Caco-2 (cell line): ENCODE measurements at regions of chr5 and their contacts with region 1.

Region 1: GRCh38 chr5:96614110-96614691 is 48.0 kb upstream of the CAST start:
- DNase-seq: peak; percentile 73 to 82
- H3K4me3 ChIP-seq: no peak overlapping the region
- H3K4me3 Mint-ChIP-seq: no peak overlapping the region
- H3K27ac Mint-ChIP-seq: peak overlapping the region; percentile 8
- H3K4me1 ChIP-seq: peaks cover 7% of the 10 kb centered on the region
- H3K4me1 Mint-ChIP-seq: no peaks in the 10 kb centered on the region
- H3K27me3 ChIP-seq: no peaks in the 10 kb centered on the region
- H3K27me3 Mint-ChIP-seq: no peaks in the 10 kb centered on the region
- CTCF ChIP-seq: peak; percentile 33 to 82

Region 2: GRCh38 chr5:96527768-96528661 is 86.2 kb before region 1 on chr5:
- CTCF ChIA-PET with region 1: no interaction called
- POLR2A ChIA-PET with region 1: no interaction called
- intact Hi-C with region 1: no loop called
- DNase-seq: no peak
- H3K4me3 ChIP-seq: no peak overlapping the region
- H3K4me3 Mint-ChIP-seq: no peak overlapping the region
- H3K27ac Mint-ChIP-seq: no peak overlapping the region
- H3K4me1 ChIP-seq: no peaks in the 10 kb centered on the region
- H3K4me1 Mint-ChIP-seq: no peaks in the 10 kb centered on the region
- H3K27me3 ChIP-seq: no peaks in the 10 kb centered on the region
- H3K27me3 Mint-ChIP-seq: peaks cover 6% of the 10 kb centered on the region
- CTCF ChIP-seq: no peak

Region 3: DNA sequence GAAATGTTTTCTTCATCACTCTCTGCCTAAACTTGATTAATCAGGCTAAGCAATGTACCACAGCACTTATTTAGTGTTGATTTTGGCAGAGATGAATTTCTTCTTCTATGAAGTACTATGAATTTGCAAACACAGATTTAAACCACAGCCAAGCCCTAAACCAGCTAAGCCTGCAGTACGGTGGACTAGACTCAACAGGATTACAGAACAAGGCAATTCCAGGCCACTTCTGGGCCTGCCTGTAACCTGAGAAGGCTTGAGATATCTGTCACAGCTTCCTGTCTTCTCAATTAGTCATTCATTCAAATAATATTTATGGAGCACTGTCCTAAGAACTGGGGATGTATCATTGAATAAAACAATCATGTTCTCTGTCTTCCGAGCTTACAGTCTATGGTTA is 15.6 kb after region 1 on chr5:
- CTCF ChIA-PET with region 1: no interaction called
- POLR2A ChIA-PET with region 1: no interaction called
- intact Hi-C with region 1: no loop called
- DNase-seq: no peak
- H3K4me3 ChIP-seq: no peak overlapping the region
- H3K4me3 Mint-ChIP-seq: no peak overlapping the region
- H3K27ac Mint-ChIP-seq: peak overlapping the region; percentile 62
- H3K4me1 ChIP-seq: peaks cover 46% of the 10 kb centered on the region
- H3K4me1 Mint-ChIP-seq: peaks cover 64% of the 10 kb centered on the region
- H3K27me3 ChIP-seq: no peaks in the 10 kb centered on the region
- H3K27me3 Mint-ChIP-seq: no peaks in the 10 kb centered on the region
- CTCF ChIP-seq: no peak

Region 4: GRCh38 chr5:96641368-96642228 is 27.4 kb after region 1 on chr5:
- CTCF ChIA-PET with region 1: interaction called, 5 read pairs
- POLR2A ChIA-PET with region 1: no interaction called
- intact Hi-C with region 1: loop called (anchors 1 kb)
- DNase-seq: peak; percentile 61 to 73
- H3K4me3 ChIP-seq: no peak overlapping the region
- H3K4me3 Mint-ChIP-seq: peak overlapping the region; percentile 55
- H3K27ac Mint-ChIP-seq: peak overlapping the region; percentile 86
- H3K4me1 ChIP-seq: peaks cover 61% of the 10 kb centered on the region
- H3K4me1 Mint-ChIP-seq: peaks cover 49% of the 10 kb centered on the region
- H3K27me3 ChIP-seq: no peaks in the 10 kb centered on the region
- H3K27me3 Mint-ChIP-seq: no peaks in the 10 kb centered on the region
- CTCF ChIP-seq: no peak

Region 5: DNA sequence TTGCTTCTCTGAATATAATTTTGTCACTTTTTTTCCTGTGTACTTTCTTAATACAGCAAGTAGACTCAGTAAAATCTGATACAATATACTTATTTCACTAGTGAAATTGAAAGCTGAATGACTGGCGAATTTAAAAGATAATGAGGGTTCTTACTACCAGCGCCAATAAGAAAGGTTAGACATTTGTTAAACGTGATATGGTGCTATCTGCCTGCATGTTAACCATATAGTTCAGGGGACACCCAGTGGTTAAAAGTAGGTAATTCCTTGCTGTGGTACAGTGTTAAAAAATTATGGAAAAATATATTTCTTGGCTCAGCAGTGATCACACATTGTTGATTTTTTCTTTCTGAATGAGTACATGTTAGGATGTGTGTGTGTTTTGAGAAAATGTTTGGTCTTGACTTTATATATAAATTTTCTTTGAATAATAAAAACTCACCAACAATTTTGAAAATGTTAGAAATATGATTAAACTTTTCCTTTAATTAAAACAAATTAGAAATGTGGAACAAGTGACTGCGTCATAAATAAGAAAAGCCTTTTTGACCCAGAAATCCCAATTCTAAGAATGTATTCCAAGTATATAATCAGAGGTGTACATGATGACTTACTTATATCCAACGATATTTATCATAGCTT is 73.7 kb after region 1 on chr5:
- CTCF ChIA-PET with region 1: interaction called, 6 read pairs
- POLR2A ChIA-PET with region 1: no interaction called
- intact Hi-C with region 1: loop called (anchors 1 kb)
- DNase-seq: peak in 1 of 2 experiments; percentile 38
- H3K4me3 ChIP-seq: no peak overlapping the region
- H3K4me3 Mint-ChIP-seq: no peak overlapping the region
- H3K27ac Mint-ChIP-seq: no peak overlapping the region
- H3K4me1 ChIP-seq: peaks cover 10% of the 10 kb centered on the region
- H3K4me1 Mint-ChIP-seq: peaks cover 24% of the 10 kb centered on the region
- H3K27me3 ChIP-seq: no peaks in the 10 kb centered on the region
- H3K27me3 Mint-ChIP-seq: no peaks in the 10 kb centered on the region
- CTCF ChIP-seq: peak; percentile 61 to 65

Region 6: GRCh38 chr5:96702503-96703383 is 88.5 kb after region 1 on chr5:
- CTCF ChIA-PET with region 1: no interaction called
- POLR2A ChIA-PET with region 1: no interaction called
- intact Hi-C with region 1: no loop called
- DNase-seq: peak; percentile 57 to 81
- H3K4me3 ChIP-seq: peak overlapping the region; percentile 43
- H3K4me3 Mint-ChIP-seq: peak overlapping the region; percentile 62
- H3K27ac Mint-ChIP-seq: peak overlapping the region; percentile 39
- H3K4me1 ChIP-seq: peaks cover 7% of the 10 kb centered on the region; the same call in 1 of the 2 replicates
- H3K4me1 Mint-ChIP-seq: peaks cover 11% of the 10 kb centered on the region
- H3K27me3 ChIP-seq: no peaks in the 10 kb centered on the region
- H3K27me3 Mint-ChIP-seq: no peaks in the 10 kb centered on the region
- CTCF ChIP-seq: no peak

Region 7: DNA sequence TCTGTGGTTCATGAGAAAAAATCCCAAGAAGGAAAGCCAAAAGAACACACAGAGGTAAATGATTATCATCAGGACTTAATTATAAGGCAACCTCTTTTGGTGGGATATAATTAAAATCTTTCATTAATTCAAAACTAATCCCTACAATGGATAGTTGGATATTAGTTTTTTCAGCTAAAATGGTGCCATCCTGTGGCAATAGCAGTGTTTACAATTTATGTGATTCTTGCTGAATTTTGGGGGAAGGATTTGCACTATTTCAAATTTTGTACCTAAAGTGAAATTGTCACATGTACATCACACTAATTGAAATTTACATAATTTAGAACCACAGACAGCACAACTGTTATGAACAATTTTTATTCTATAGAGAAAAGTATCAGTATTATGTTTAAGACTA is 115.0 kb after region 1 on chr5:
- CTCF ChIA-PET with region 1: interaction called, 4 read pairs
- POLR2A ChIA-PET with region 1: no interaction called
- intact Hi-C with region 1: loop called (anchors 1 kb)
- DNase-seq: no peak
- H3K4me3 ChIP-seq: no peak overlapping the region
- H3K4me3 Mint-ChIP-seq: no peak overlapping the region
- H3K27ac Mint-ChIP-seq: no peak overlapping the region
- H3K4me1 ChIP-seq: peaks cover 12% of the 10 kb centered on the region
- H3K4me1 Mint-ChIP-seq: peaks cover 6% of the 10 kb centered on the region
- H3K27me3 ChIP-seq: no peaks in the 10 kb centered on the region
- H3K27me3 Mint-ChIP-seq: no peaks in the 10 kb centered on the region
- CTCF ChIP-seq: peak in 1 of 2 experiments; percentile 24

Region 8: DNA sequence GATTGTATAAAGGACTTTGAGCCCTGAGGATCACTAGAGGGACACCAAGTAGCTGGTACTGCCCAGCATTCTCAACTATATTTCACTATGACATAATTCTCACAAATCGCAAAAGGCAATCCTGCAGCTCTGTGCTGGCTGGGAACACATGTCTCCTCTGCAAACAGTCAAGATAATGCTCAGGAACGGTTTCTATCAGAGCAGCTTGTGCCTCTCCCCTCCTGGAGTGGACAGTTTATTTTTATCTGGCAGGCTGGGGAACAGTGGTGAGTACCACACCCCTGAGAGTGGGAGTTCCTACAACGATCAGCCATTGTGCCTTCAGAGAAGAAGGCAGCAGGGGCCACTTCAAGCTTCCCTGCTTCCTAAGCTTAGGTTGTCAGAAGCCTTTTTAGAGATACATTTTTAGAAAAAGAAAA is 127.7 kb after region 1 on chr5:
- CTCF ChIA-PET with region 1: no interaction called
- POLR2A ChIA-PET with region 1: no interaction called
- intact Hi-C with region 1: no loop called
- DNase-seq: no peak
- H3K4me3 ChIP-seq: no peak overlapping the region
- H3K4me3 Mint-ChIP-seq: no peak overlapping the region
- H3K27ac Mint-ChIP-seq: no peak overlapping the region
- H3K4me1 ChIP-seq: peaks cover 18% of the 10 kb centered on the region
- H3K4me1 Mint-ChIP-seq: peaks cover 29% of the 10 kb centered on the region
- H3K27me3 ChIP-seq: no peaks in the 10 kb centered on the region
- H3K27me3 Mint-ChIP-seq: no peaks in the 10 kb centered on the region
- CTCF ChIP-seq: no peak

Region 9: DNA sequence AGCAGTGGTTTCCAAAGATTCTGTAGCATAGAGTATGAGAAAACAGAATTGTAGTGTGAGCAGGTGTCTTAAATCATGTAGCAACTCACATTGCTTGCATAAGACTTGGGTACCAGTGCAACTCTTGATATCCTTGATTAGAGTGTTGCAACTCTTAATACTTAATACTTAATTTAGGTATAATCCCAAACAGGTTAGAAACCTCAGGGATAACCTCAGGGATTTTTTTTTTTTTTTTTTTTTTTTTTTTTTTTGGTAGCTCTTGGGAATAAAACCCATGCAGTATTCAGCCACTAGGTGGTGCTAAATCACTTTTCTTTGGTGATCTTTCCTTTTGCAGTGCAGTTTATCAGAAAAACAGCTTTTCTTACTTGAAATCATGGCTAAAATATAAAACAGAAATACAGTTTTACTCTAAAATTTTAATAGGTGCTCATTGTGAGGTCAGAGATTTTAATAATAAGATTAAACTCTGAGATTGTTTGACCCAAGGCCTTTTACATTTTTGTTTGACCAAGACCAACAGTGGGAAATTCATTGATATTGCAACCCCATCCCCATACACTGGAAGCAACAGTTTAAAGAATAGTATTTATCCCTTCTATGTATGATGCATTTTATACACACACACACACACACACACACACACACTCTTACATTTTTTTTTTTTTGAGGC is 138.3 kb after region 1 on chr5:
- CTCF ChIA-PET with region 1: interaction called, 23 read pairs
- POLR2A ChIA-PET with region 1: no interaction called
- intact Hi-C with region 1: loop called (anchors 5 kb)
- DNase-seq: peak in 1 of 2 experiments; percentile 71
- H3K4me3 ChIP-seq: no peak overlapping the region
- H3K4me3 Mint-ChIP-seq: no peak overlapping the region
- H3K27ac Mint-ChIP-seq: no peak overlapping the region
- H3K4me1 ChIP-seq: no peaks in the 10 kb centered on the region
- H3K4me1 Mint-ChIP-seq: no peaks in the 10 kb centered on the region
- H3K27me3 ChIP-seq: no peaks in the 10 kb centered on the region
- H3K27me3 Mint-ChIP-seq: no peaks in the 10 kb centered on the region
- CTCF ChIP-seq: peak; percentile 61 to 70

Region 10: DNA sequence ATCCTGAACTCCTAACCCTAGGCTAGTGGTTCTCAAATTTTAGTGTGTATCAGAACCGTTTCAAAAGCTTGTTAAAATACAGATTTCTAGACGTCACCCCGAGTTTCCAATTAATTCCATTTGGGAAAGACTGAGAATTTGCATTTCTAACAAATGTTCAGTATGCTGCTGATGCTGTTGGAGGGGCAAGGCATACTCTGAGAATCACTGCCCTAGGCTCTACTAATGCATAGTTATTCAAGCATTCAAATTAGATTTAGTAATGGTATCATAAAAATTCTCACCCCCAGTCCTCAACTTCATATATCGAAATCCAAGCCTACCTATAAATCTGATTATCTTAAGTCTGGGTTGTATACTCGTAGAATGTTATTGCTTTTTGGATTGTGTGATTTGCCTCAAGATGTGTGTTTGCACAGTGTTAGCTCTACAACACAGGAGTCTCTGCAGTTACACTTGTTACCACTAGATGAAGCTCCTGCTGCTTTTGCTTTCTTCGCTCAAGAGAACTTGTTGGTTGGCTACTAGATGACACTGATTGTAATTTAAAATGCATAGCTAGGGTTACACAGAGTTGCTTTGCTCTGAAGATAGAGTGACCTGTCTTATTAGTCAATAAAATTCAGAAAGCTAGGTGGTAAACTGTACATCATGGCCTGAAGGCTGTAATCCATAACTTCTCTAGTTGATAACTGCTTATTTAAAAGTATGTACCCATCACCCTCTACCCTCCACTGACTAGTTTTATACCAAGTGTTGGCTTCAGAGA is 254.6 kb after region 1 on chr5:
- CTCF ChIA-PET with region 1: no interaction called
- POLR2A ChIA-PET with region 1: no interaction called
- intact Hi-C with region 1: loop called (anchors 2 kb)
- DNase-seq: peak in 1 of 2 experiments; percentile 59
- H3K4me3 ChIP-seq: no peak overlapping the region
- H3K4me3 Mint-ChIP-seq: no peak overlapping the region
- H3K27ac Mint-ChIP-seq: no peak overlapping the region
- H3K4me1 ChIP-seq: peaks cover 4% of the 10 kb centered on the region; the same call in 1 of the 2 replicates
- H3K4me1 Mint-ChIP-seq: peaks cover 3% of the 10 kb centered on the region
- H3K27me3 ChIP-seq: no peaks in the 10 kb centered on the region
- H3K27me3 Mint-ChIP-seq: no peaks in the 10 kb centered on the region
- CTCF ChIP-seq: peak; percentile 91 to 96